CD4-positive, alpha-beta memory T cell (primary cell): ENCODE measurements at regions of chr2 and their contacts with region 1.

Region 1: DNA sequence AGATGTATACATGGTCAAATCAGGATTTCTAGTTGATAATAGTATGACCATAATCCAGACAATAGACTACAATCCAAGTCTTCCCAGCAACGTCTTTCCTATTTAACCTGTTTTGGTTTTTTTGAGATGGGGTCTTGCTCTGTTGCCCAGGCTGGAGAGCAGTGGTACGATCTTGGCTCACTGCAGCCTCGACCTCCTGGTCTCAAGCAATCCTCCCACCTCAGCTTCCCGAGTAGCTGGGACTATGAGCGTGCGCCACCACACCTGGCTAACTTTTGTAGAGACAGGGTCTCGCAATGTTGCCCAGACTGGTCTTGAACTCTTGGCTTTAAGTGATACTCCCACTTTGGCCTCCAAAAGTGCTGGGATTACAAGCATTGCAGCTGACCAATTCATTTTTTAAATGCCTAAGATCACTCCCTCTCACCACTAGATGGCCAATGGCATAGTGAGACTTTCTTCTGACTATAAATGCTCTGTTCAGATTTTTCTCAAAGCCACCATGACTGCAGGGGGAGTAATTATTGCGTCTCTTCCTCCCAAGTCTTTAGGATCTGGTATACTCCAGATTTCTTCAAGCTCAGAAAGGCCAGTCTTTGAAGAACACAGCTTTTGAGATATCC is 47.6 kb downstream of the HNRNPLL start:
- DNase-seq: no peak
- H3K4me3 ChIP-seq: no peak overlapping the region
- H3K4me3 Mint-ChIP-seq: no peak overlapping the region
- H3K27ac ChIP-seq: no peak overlapping the region
- H3K27ac Mint-ChIP-seq: peak overlapping the region in 1 of 7 donors; percentile 32
- H3K4me1 ChIP-seq: peaks cover 5% of the 10 kb centered on the region
- H3K4me1 Mint-ChIP-seq: peaks cover 9 to 20% (median 16%) of the 10 kb centered on the region in 4 donors
- H3K27me3 ChIP-seq: no peaks in the 10 kb centered on the region
- H3K27me3 Mint-ChIP-seq: no peaks in the 10 kb centered on the region

Region 2: DNA sequence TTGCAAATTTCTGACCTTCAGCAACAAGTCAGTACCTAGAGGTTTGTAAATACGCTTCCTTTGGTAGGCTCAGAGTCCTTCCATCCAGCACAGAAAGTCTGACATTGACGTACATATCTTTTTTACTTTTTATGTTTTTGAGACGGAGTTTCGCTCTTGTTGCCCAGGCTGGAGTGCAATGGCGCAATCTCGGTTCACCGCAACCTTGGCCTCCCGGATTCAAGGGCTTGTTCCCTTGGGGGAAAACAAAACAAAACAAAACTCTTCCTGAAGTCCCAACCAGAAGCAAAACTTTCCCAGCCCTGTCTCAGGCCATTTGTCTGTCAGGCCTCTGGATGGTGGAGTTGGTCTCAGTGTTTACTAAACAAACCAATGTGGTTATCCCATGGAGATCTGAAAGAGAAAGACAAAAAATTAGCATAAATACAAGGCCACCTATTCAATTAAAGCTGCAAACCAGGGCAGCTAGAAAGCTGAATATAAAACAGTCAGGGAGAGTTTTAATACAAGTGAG is 148.4 kb before region 1 on chr2:
- CTCF ChIA-PET with region 1: no interaction called
- POLR2A ChIA-PET with region 1: no interaction called
- intact Hi-C with region 1: no loop called
- DNase-seq: no peak
- H3K4me3 ChIP-seq: no peak overlapping the region
- H3K4me3 Mint-ChIP-seq: no peak overlapping the region
- H3K27ac ChIP-seq: no peak overlapping the region
- H3K27ac Mint-ChIP-seq: no peak overlapping the region
- H3K4me1 ChIP-seq: no peaks in the 10 kb centered on the region
- H3K4me1 Mint-ChIP-seq: no peaks in the 10 kb centered on the region
- H3K27me3 ChIP-seq: no peaks in the 10 kb centered on the region
- H3K27me3 Mint-ChIP-seq: no peaks in the 10 kb centered on the region

Region 3: GRCh38 chr2:38565333-38565732 is 10.2 kb after region 1 on chr2:
- CTCF ChIA-PET with region 1: interaction called, 11 read pairs
- POLR2A ChIA-PET with region 1: interaction called, 4 read pairs
- intact Hi-C with region 1: no loop called
- DNase-seq: no peak
- H3K4me3 ChIP-seq: no peak overlapping the region
- H3K4me3 Mint-ChIP-seq: no peak overlapping the region
- H3K27ac ChIP-seq: no peak overlapping the region
- H3K27ac Mint-ChIP-seq: no peak overlapping the region
- H3K4me1 ChIP-seq: no peaks in the 10 kb centered on the region
- H3K4me1 Mint-ChIP-seq: no peaks in the 10 kb centered on the region
- H3K27me3 ChIP-seq: no peaks in the 10 kb centered on the region
- H3K27me3 Mint-ChIP-seq: no peaks in the 10 kb centered on the region